Activated CD8-positive, alpha-beta memory T cell treated with anti-CD3 and anti-CD28 coated beads, Interleukin-2, amount 10 ng/mL, durations not matched to agents 7 days and 5 days (primary cell): ENCODE measurements at regions of chr17 and their contacts with region 1.

Region 1: GRCh38 chr17:42577532-42578281 is at the start of gene PSMC3IP:
- DNase-seq: peak; percentile 97
- ATAC-seq: peak; percentile 96
- H3K4me3 Mint-ChIP-seq: peak within 1 kb of the TSS; percentile 82
- H3K27ac Mint-ChIP-seq: peak within 1 kb of the TSS; percentile 95
- H3K4me1 Mint-ChIP-seq: peaks cover 49% of the 10 kb centered on the region
- H3K27me3 Mint-ChIP-seq: no peaks in the 10 kb centered on the region
- total RNA-seq, gene PSMC3IP: 24.4 to 25.5 TPM

Region 2: GRCh38 chr17:42548070-42548837 is 29.5 kb before region 1 on chr17:
- CTCF ChIA-PET with region 1: interaction called, 10 read pairs
- DNase-seq: peak; percentile 87
- ATAC-seq: peak; percentile 89
- H3K4me3 Mint-ChIP-seq: peak overlapping the region; percentile 43
- H3K27ac Mint-ChIP-seq: no peak overlapping the region
- H3K4me1 Mint-ChIP-seq: peaks cover 14% of the 10 kb centered on the region
- H3K27me3 Mint-ChIP-seq: no peaks in the 10 kb centered on the region

Region 3: DNA sequence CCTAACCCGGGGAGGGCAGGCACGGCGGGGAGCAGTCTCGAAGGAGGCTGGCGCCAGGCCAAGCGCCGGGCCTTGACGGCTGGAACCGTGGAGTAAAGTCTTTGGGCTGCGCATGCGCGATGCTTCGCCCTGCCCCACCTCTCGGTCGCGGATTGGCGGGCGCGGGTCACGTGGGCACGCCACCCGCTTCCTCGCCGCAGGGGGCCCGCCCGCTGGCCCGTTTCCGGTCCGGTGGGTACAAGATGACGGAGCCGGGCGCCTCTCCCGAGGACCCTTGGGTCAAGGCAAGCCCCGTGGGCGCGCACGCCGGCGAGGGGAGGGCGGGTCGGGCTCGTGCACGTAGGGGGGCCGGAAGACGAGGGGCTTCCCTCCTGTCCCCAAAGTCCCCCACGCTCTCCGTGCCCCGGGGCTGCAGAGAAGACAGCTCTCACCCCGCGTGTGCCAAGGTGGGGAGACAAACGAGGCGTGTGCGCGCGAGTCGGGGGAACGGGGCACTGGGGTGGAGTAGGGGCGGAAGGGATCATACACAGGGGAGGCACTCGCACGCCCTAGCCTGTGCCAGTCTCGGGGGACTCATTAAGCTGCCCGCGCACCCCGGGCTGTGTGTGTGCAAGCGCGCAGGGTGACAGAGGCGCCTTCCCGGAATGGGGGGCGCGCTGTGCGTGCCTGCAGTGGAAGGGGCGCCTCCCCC is 10.7 kb before region 1 on chr17 and contains the start of gene MLX:
- CTCF ChIA-PET with region 1: interaction called, 62 read pairs
- DNase-seq: peak; percentile 94
- ATAC-seq: peak; percentile 78
- H3K4me3 Mint-ChIP-seq: peak within 1 kb of the TSS; percentile 94
- H3K27ac Mint-ChIP-seq: peak within 1 kb of the TSS; percentile 94
- H3K4me1 Mint-ChIP-seq: peaks cover 62% of the 10 kb centered on the region
- H3K27me3 Mint-ChIP-seq: no peaks in the 10 kb centered on the region
- total RNA-seq, gene MLX: 54.8 to 60.4 TPM

Region 4: DNA sequence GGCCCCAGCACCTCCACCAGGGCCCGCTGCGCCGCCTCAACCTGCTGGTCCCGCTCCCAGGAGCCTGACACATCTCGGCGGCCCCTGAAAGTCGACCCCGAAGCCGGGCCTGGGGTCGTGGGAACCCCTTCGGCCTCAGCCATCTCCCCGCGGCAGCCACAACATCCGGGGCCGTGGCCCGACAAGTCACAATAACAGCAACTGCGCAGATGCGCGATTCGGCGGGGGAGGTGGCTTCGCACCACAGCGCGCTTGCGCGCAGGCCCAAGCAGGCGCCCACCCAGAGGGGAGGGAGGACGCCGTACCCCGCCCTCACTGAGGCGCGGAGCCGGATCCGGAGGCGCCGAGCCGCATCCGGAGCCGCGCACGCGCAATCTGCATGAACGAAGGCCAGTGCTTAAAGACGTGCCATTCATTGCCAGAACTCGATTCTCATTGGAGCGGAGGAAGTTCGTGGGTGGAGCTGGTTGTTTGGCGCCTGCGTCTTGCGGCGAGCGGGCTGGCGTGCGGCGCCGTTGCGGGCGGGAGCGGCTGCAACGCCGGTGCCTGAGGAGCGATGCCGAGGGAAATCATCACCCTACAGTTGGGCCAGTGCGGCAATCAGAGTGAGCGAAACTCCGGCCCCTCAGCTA is 31.6 kb after region 1 on chr17 and contains the starts of genes RETREG3 and TUBG1:
- CTCF ChIA-PET with region 1: interaction called, 45 read pairs
- DNase-seq: peak; percentile 99
- ATAC-seq: peak; percentile 92
- H3K4me3 Mint-ChIP-seq: peak within 1 kb of the TSS; percentile 94
- H3K27ac Mint-ChIP-seq: peak within 1 kb of the TSS; percentile 92
- H3K4me1 Mint-ChIP-seq: peaks cover 47% of the 10 kb centered on the region
- H3K27me3 Mint-ChIP-seq: no peaks in the 10 kb centered on the region
- total RNA-seq, gene RETREG3: 46.7 to 54.2 TPM
- total RNA-seq, gene TUBG1: 92.3 to 103 TPM

Region 5: DNA sequence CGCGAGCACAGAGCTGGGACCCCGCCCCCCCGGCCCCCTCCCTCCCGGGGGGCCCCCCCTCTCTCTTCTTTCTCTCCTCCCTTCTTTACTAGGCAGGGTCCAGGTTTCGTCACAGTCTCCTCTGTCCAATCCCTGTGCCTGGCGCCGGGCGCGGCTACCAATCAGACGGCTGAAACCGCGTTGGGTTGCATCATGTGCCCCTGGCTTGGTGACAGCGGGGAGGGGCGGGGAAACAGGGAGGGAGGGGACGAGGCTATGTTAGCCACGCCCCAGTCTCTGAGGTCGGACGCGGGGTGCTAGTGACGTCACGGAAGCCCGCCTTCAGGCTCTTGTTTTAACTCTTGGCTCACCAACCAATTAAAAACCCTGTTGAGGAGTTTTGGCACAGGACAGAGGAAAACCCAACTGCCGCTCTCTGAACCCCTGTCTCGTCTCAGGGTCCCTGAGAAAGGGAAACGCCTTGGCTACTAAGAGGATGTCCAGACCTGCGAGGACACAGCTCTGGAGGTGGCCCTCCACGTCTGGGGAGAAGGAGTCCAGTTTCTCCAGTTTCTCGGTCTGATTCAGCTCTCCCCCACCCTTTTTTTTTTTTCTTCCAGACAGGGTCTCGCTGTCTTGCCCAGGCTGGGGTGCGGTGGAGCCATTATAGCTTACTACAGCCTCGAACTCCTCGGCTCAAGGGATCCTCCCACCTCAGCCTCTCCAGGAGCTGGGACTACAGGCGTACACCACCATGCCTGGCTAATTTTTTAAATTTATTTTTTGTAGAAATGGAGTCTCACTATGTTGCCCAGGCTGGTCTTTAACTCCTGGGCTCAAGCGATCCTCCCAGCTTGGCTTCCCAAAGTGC is 99.5 kb after region 1 on chr17:
- CTCF ChIA-PET with region 1: interaction called, 92 read pairs
- DNase-seq: peak; percentile 100
- ATAC-seq: peak; percentile 81
- H3K4me3 Mint-ChIP-seq: peak overlapping the region; percentile 73
- H3K27ac Mint-ChIP-seq: peak overlapping the region; percentile 85
- H3K4me1 Mint-ChIP-seq: peaks cover 59% of the 10 kb centered on the region
- H3K27me3 Mint-ChIP-seq: peaks cover 48% of the 10 kb centered on the region

Region 6: GRCh38 chr17:42760652-42761581 is 183.2 kb after region 1 on chr17 and contains the start of gene RAMP2:
- CTCF ChIA-PET with region 1: interaction called, 110 read pairs
- DNase-seq: no peak
- ATAC-seq: peak; percentile 42
- H3K4me3 Mint-ChIP-seq: no peak within 1 kb of the TSS
- H3K27ac Mint-ChIP-seq: no peak within 1 kb of the TSS
- H3K4me1 Mint-ChIP-seq: peaks cover 3% of the 10 kb centered on the region
- H3K27me3 Mint-ChIP-seq: peaks cover 60% of the 10 kb centered on the region
- total RNA-seq, gene RAMP2: not detected

Region 7: DNA sequence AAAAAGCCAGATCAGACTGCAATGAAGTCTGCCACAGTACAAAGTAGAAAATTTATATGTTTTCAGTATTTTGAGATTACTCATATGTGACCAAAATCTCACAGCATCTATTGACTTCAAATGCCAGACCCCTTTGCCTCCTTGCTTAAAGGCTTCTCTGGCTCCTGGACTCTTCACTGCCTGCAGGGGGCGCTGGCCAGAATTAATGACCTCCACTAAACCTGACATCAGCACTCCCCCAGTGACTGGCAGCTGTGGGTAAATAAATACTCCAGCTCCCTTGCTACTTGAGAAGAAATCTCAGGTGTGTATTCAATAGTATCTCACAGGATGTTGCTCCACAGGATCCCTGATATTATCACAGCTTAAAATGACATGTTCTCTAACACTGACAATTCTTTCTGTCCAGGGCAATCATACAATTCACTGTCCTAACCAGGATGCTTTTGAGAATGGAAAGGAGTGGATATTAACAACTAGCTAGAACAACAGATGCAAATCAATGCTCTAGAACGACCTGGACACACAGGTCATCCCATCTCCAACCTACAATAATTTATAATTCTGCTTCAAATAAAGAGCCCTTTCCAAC is 242.3 kb after region 1 on chr17:
- CTCF ChIA-PET with region 1: interaction called, 18 read pairs
- DNase-seq: peak; percentile 81
- ATAC-seq: peak; percentile 35
- H3K4me3 Mint-ChIP-seq: no peak overlapping the region
- H3K27ac Mint-ChIP-seq: no peak overlapping the region
- H3K4me1 Mint-ChIP-seq: peaks cover 33% of the 10 kb centered on the region
- H3K27me3 Mint-ChIP-seq: no peaks in the 10 kb centered on the region